Transverse colon (tissue), 4 donors: ENCODE measurements at regions of chr2 and their contacts with region 1.

Region 1: DNA sequence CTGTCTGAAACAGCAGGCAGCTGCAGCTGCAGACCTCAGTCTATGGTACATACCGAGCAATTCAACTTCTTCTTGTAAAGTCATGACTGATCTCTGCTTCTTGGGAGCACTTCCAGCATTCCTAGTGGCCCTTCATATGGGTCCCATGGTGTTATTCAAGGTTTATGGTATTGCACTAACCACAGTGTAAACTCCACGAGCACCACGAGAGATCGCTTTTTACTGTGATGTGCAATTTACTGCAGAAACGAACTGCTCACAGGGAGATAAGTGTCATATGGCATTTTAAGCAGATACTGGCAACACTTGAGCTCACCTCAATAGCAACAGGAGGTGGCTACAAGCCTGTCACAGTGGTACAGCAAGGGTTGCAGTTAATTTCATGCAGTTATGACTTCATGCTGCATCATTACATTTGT is 38.6 kb upstream of the SH3BP4 start:
- DNase-seq: no peak
- H3K4me3 ChIP-seq: no peak overlapping the region
- H3K27ac ChIP-seq: no peak overlapping the region
- H3K4me1 ChIP-seq: no peaks in the 10 kb centered on the region
- H3K27me3 ChIP-seq: no peaks in the 10 kb centered on the region
- CTCF ChIP-seq: no peak
- EP300 ChIP-seq: no peak
- POLR2A ChIP-seq: no peak

Region 2: GRCh38 chr2:233740875-233741274 is 1172.3 kb before region 1 on chr2:
- in situ Hi-C with region 1: no loop called
- intact Hi-C with region 1: no loop called
- DNase-seq: no peak
- H3K4me3 ChIP-seq: no peak overlapping the region
- H3K27ac ChIP-seq: no peak overlapping the region
- H3K4me1 ChIP-seq: peaks cover 0 to 4% (median 0%) of the 10 kb centered on the region in 4 donors
- H3K27me3 ChIP-seq: no peaks in the 10 kb centered on the region
- CTCF ChIP-seq: no peak
- EP300 ChIP-seq: no peak
- POLR2A ChIP-seq: no peak

Region 3: GRCh38 chr2:234879671-234880455 is 33.4 kb before region 1 on chr2:
- in situ Hi-C with region 1: no loop called
- intact Hi-C with region 1: loop called (anchors 1 kb)
- DNase-seq: no peak
- H3K4me3 ChIP-seq: no peak overlapping the region
- H3K27ac ChIP-seq: no peak overlapping the region
- H3K4me1 ChIP-seq: peaks cover 0 to 15% (median 0%) of the 10 kb centered on the region in 4 donors
- H3K27me3 ChIP-seq: no peaks in the 10 kb centered on the region
- CTCF ChIP-seq: no peak
- EP300 ChIP-seq: no peak
- POLR2A ChIP-seq: no peak